ENCODE measurements at regions of chr12 and their contacts with region 1.

Region 1: GRCh38 chr12:76348079-76348901 is at the start of gene BBS10:
- DNase-seq: peak; percentile 79 to 84
- H3K4me3 ChIP-seq: peak within 1 kb of the TSS; percentile 88
- H3K27ac ChIP-seq: peak within 1 kb of the TSS; percentile 60
- H3K4me1 ChIP-seq: peaks cover 14% of the 10 kb centered on the region
- H3K27me3 ChIP-seq: no peaks in the 10 kb centered on the region
- CTCF ChIP-seq: peak; percentile 47
- total RNA-seq, gene BBS10: 5.5 and 8.4 TPM in 2 replicates

Region 2: DNA sequence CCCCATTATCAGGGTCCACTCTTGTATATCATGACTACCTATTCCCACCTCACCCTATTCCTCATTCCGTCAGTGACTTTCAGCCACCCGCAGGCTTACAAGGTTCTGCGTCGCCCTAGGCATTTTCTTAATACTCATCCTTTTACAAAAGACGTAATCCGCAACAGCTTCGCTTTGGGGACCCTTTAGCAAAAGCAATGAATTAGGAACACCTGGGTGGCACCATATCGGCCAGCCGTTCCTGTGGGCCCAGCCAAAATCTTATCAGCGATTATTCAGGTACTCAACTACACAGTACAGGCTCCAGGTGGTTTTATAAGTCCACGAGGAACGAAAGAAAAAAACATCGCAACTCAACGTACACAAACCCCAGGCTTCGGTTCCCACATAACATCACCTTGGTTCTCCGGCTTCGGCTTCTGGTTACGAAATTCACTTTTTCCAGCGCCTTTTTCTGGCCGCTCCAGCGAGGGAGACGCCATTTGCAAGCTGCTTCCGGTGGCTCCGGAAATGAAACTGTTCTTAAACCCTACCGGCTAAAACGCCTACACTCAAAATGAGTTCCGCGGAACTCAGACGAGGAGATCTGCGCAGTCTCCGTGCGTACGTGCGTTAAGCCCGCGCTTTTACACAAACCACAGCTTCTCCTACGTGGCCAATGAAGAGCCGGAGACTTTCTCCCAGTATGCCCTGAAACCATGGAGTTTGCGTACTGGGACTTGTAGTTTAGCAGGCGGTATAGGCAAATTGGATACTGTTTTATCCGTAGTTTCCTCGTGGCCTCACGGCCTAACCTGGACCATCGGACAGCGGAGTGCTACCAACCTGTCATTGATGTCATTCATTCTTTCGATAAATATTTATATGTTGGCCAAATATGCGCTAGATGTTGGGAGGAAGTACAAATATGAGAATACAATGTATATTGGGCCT is 836.9 kb before region 1 on chr12 and contains the start of gene KRR1:
- CTCF ChIA-PET with region 1: no interaction called
- POLR2A ChIA-PET with region 1: no interaction called
- intact Hi-C with region 1: loop called (anchors 5 kb)
- DNase-seq: peak; percentile 81 to 92
- H3K4me3 ChIP-seq: peak within 1 kb of the TSS; percentile 91
- H3K27ac ChIP-seq: peak within 1 kb of the TSS; percentile 59
- H3K4me1 ChIP-seq: peaks cover 24% of the 10 kb centered on the region
- H3K27me3 ChIP-seq: no peaks in the 10 kb centered on the region
- CTCF ChIP-seq: no peak
- total RNA-seq, gene KRR1: 41.6 and 45.9 TPM in 2 replicates

Region 3: DNA sequence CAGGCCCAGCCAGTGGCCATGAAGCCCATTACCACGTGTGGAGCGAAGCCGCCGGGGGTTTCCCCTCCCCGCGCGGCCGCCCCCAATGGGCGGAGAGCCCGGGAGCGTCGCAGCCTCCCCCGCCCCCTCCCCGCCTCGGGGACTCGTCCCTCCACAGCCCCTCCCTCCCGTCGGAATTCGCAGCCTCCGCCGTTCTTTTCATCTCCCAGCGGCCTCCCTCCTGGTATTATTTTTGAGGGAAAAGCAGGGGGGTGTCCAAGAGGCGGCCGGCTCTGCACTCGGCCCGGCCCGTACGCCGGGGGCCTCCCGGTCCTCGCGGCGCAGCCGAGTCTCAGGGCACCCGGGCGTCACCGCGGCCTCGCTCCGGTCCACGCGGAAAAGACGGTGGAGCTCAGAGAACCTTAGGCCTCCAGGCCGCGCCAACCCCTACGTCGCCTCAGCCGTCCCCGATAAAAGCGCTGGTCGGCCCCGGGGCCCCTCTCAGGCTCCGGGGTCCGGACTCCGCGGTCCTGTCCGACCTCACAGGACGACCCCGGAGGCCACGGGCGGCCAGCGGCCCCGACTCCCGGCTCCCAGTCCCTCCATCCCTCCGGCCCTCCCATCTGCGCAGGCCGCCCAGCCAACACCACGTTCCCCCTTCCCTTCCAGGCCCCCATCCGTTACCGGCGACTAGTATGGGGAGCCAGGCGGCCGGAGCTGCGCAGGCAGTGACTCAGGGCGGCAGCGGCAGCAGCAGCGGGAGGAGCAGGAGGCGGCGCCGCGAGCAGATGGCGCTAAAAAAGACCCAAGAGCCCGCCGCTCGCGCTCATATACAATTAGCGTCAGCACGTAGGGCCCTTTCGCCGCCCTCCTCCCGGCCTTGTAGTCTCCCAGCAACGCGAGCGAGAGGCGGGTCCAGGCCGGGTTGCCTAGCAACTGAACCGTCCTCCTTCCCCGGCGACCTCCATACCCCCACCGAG is 264.1 kb before region 1 on chr12 and contains the start of gene NAP1L1:
- CTCF ChIA-PET with region 1: interaction called, 3 read pairs
- POLR2A ChIA-PET with region 1: no interaction called
- intact Hi-C with region 1: loop called (anchors 1 kb)
- DNase-seq: peak; percentile 86 to 95
- H3K4me3 ChIP-seq: peak within 1 kb of the TSS; percentile 98
- H3K27ac ChIP-seq: peak within 1 kb of the TSS; percentile 86
- H3K4me1 ChIP-seq: peaks cover 25% of the 10 kb centered on the region
- H3K27me3 ChIP-seq: no peaks in the 10 kb centered on the region
- CTCF ChIP-seq: no peak
- total RNA-seq, gene NAP1L1: 466 and 587 TPM in 2 replicates

Region 4: DNA sequence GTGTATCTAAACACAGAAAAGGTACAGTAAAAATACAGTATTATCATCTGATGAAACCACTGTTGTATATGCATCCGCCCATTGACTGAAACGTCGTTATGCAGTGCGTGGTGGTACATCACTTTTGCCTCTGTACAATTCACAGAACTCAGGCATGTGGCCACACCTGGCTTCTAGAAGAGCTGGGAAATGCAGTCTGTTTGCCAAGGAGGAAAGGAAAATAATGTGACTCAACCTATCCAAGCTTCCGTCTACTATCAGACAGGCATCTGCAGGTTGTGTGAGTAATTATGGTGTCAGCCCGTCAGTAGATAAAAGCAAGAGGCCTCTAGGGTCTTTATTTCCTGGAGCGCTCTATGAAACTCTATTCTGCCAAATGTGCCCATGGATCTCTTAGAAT is 111.7 kb before region 1 on chr12:
- CTCF ChIA-PET with region 1: no interaction called
- POLR2A ChIA-PET with region 1: no interaction called
- intact Hi-C with region 1: loop called (anchors 2 kb)
- DNase-seq: peak; percentile 44 to 87
- H3K4me3 ChIP-seq: no peak overlapping the region
- H3K27ac ChIP-seq: peak overlapping the region; percentile 42
- H3K4me1 ChIP-seq: peaks cover 18% of the 10 kb centered on the region
- H3K27me3 ChIP-seq: no peaks in the 10 kb centered on the region
- CTCF ChIP-seq: no peak

Region 5: DNA sequence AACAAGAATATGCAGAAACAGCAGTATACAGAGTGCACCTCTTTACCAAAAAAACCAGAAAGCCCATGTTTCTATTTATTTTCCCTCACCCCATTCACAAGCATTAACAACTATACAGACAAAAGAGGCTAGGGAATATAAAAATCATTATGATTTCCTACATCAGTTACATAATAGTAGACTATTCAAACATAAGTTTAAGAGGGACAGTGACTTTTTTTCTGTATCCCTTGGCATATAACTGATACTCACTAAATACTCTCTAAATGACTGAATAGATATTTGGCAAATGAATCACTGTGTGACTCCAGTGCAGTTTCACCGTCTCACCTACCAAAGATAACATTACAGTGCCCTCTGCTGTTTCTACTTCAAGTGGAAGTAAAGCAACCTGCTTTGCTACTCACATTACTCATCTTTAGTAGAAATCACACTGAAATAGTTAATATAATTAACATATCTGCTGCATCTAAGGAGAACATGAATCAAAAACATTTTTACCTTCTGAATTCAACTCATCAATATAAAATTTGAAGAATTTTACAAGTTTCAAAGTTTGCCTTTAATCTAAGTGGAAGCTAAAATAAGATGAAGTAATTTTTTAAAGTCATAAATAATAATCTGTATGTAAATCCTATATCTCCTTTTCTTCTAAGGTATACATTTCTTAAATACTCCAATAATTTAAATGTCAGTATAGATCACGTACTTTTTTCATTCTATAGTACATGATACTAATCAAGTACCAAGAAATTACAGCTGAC is 107.5 kb after region 1 on chr12:
- CTCF ChIA-PET with region 1: no interaction called
- POLR2A ChIA-PET with region 1: no interaction called
- intact Hi-C with region 1: loop called (anchors 10 kb)
- DNase-seq: peak; percentile 26 to 91
- H3K4me3 ChIP-seq: no peak overlapping the region
- H3K27ac ChIP-seq: peak overlapping the region; percentile 78
- H3K4me1 ChIP-seq: peaks cover 8% of the 10 kb centered on the region
- H3K27me3 ChIP-seq: no peaks in the 10 kb centered on the region
- CTCF ChIP-seq: peak; percentile 77

Measured in PC-9 (cell line).